Activated CD8-positive, alpha-beta T cell treated with anti-CD3 and anti-CD28 coated beads for 36 hours (primary cell): ENCODE measurements at regions of chr15 and their contacts with region 1.

Region 1: DNA sequence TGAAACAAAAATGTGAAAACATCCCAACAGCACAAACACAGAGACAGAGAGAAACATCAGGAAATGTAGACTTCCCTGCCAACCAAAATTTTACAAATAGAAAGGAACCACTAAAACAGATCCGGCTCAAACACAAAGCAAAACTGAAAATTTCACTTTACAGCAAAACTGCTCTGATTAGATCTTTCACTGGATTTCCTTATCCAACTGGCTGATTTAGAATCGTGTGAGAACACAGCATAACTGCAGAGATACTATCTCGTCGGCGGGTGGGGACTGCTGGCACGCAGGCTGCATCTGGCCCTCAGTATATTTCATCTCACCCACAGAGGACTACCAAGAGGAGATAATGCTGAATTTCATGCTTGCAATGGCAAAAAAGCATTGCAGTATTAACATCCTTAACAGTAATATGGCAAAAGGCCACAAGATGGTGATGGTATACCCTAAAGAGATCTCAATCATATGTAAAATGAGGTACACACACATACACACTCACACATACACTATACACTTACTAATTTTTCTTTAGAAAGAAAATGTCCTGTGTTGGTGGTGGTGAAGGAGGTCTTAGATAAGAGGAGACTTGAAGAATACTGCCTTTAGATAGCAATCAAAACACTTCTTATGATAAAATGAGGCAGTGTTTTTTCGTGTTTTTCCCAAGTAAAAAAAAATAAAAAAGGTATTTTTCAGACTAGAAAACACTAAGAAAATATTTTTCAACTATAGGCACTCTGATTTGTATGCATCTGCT is 10.6 kb upstream of the LEO1 start:
- DNase-seq: peak; percentile 76
- ATAC-seq: peak; percentile 95
- H3K4me3 Mint-ChIP-seq: peak overlapping the region; percentile 70
- H3K27ac Mint-ChIP-seq: peak overlapping the region; percentile 86
- H3K4me1 Mint-ChIP-seq: peaks cover 14% of the 10 kb centered on the region
- H3K27me3 Mint-ChIP-seq: no peaks in the 10 kb centered on the region
- CTCF ChIP-seq: peak; percentile 93

Region 2: GRCh38 chr15:51971375-51972133 is 10.6 kb before region 1 on chr15 and contains the start of gene LEO1:
- CTCF ChIA-PET with region 1: interaction called, 14 read pairs
- POLR2A ChIA-PET with region 1: interaction called, 17 read pairs
- intact Hi-C with region 1: no loop called
- DNase-seq: peak; percentile 94
- ATAC-seq: peak; percentile 94
- H3K4me3 Mint-ChIP-seq: peak within 1 kb of the TSS; percentile 94
- H3K27ac Mint-ChIP-seq: peak within 1 kb of the TSS; percentile 89
- H3K4me1 Mint-ChIP-seq: peaks cover 15% of the 10 kb centered on the region
- H3K27me3 Mint-ChIP-seq: peaks cover 1% of the 10 kb centered on the region
- CTCF ChIP-seq: no peak
- total RNA-seq, gene LEO1: 28.9 to 31.1 TPM